Aorta (tissue), 5 donors: ENCODE measurements at regions of chr9 and their contacts with region 1.

Region 1: GRCh38 chr9:96654443-96655197 is 497 bp downstream of the PRXL2C start:
- DNase-seq: peak; percentile 92 to 96
- ATAC-seq: peak; percentile 91
- H3K4me3 ChIP-seq: peak overlapping the region; percentile 65 to 71
- H3K27ac ChIP-seq: peak overlapping the region; percentile 93 to 99
- H3K4me1 ChIP-seq: no peaks in the 10 kb centered on the region
- H3K27me3 ChIP-seq: no peaks in the 10 kb centered on the region

Region 2: DNA sequence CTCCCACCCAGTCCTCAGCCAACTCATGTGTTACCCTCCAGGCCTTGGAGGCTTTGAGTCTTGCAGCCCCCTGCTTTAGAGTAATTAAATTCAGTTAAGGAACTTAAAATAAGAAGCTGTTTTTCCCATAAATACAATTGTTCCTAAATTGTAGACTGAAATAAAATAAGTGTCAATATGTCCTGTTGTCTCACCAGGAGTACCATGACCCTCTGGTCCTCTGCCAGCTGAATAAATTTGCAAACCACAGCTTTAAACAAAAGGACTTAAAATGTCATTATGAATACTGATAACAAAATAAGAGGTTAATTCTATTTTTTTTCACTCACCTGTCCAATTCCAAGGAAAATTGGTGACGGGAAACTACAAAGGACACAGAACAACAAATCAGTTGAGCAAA is 286.7 kb before region 1 on chr9:
- intact Hi-C with region 1: no loop called
- DNase-seq: no peak
- ATAC-seq: no peak
- H3K4me3 ChIP-seq: no peak overlapping the region
- H3K27ac ChIP-seq: no peak overlapping the region
- H3K4me1 ChIP-seq: no peaks in the 10 kb centered on the region
- H3K27me3 ChIP-seq: no peaks in the 10 kb centered on the region

Region 3: DNA sequence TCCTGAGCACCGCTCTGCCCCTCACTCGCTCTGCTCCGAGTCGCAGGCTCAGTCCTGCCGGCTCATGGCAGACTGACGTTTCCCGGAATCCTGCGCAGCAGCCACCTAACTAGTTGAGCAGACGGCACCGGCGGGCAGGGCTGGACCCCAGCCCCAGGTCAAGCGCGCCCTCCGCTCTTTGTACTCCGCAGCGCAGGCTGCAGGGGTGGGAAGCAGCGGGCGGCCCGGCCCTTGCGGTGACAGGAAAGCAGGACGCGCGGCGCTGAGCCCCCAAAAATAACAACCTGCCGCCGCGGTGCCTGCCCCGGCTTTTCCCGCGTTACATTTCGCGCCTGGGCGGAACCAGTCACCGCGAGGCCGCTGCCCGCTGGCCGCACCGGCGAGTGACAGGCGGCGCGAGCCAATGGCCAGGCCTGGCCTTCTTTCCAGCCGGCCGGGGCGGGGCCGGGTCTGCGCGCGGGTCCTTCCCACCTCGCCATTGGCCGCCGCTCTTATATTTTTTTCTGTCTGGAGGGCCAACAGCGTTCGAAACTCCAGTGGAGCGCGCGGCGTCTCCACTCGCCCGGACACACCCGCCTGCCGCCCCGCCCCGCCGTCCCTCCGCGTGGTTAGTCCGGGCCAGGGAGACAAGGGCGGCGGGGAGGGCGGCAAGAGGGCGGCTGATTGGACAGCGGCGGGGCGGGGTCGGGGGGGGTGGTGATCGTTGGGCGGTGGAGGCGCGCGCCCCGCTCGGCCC is 236.4 kb before region 1 on chr9 and contains the start of gene ZNF367:
- intact Hi-C with region 1: loop called (anchors 1 to 5 kb)
- DNase-seq: peak; percentile 99
- ATAC-seq: peak; percentile 96
- H3K4me3 ChIP-seq: peak within 1 kb of the TSS; percentile 71 to 84
- H3K27ac ChIP-seq: peak within 1 kb of the TSS; percentile 68 to 98
- H3K4me1 ChIP-seq: peaks cover 0 to 3% of the 10 kb centered on the region in 2 donors
- H3K27me3 ChIP-seq: no peaks in the 10 kb centered on the region
- total RNA-seq, gene ZNF367: 1.3 to 1.8 TPM

Region 4: DNA sequence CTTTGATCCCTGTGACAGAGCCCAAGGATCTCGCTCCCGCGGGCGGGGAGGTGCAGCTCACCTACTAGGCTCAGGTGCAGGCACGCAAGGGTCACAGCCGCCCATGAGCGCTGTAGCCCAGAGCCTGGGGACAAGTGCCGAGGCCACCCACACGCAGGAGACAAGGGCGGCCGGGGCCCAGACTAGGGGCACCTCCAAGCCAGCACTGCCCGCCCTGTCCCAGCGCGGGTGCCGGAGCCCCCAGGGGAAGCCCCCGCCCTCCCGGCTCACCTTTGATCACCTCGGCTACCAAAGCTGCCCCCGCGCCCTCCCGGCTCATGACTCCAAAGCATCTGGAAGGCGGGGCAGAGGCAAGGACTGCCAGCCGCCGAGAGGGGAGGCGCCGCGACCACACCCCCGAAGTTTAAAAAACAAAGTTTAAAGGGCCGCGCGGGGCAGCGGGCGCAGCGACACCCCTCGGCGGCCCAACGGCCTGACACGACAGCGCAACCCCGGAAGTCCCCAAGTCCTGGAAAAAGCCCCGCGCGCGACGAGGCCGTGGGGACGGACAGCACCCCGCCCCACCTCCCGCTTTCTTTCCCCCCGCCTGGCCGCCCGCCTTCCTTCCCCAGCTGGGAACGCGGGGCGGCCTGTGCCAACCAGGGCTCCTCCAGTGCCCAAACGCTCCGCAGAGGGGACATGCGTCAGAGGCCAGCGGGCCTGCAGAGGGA is 88.0 kb before region 1 on chr9:
- intact Hi-C with region 1: loop called (anchors 2 to 10 kb)
- DNase-seq: peak; percentile 90 to 93
- ATAC-seq: peak; percentile 93
- H3K4me3 ChIP-seq: peak overlapping the region; percentile 90 to 92
- H3K27ac ChIP-seq: peak overlapping the region; percentile 84 to 93
- H3K4me1 ChIP-seq: peaks cover 0 to 3% of the 10 kb centered on the region in 2 donors
- H3K27me3 ChIP-seq: no peaks in the 10 kb centered on the region

Region 5: DNA sequence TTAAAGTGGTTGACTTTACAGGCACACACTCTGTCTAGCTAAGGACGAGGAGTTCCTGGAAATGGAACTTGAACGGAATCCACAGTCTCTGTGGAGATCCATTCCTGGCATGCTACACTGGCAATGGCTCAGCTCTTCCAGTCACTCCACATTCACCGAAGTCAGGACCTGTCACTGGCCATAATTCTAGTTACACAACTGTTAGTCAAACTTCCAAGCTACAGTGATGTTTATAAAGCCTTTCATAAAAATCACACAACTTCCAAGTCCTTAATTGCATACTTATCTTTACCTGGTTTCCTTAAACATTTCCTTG is 50.7 kb before region 1 on chr9:
- intact Hi-C with region 1: loop called in 1 of 2 experiments (anchors 10 kb)
- DNase-seq: no peak
- ATAC-seq: peak; percentile 88
- H3K4me3 ChIP-seq: no peak overlapping the region
- H3K27ac ChIP-seq: peak overlapping the region in 1 of 2 donors; percentile 28
- H3K4me1 ChIP-seq: peaks cover 0 to 1% of the 10 kb centered on the region in 2 donors
- H3K27me3 ChIP-seq: no peaks in the 10 kb centered on the region